ENCODE measurements at regions of chr12 and their contacts with region 1.

Region 1: GRCh38 chr12:120984351-120984898 is 6.1 kb downstream of the HNF1A start:
- DNase-seq: peak; percentile 87
- ATAC-seq: peak; percentile 9
- H3K4me3 ChIP-seq: peak overlapping the region in 1 of 3 experiments; percentile 35; a peak in 1 of 6 replicates
- H3K27ac ChIP-seq: peak overlapping the region; percentile 75
- H3K4me1 ChIP-seq: peaks cover 50% of the 10 kb centered on the region
- H3K27me3 ChIP-seq: no peaks in the 10 kb centered on the region; a peak in 1 of 5 replicates
- CTCF ChIP-seq: no peak
- EP300 ChIP-seq: peak in 1 of 2 experiments; percentile 67; a peak in 2 of 4 replicates
- POLR2A ChIP-seq: peak in 1 of 2 experiments; percentile 47; a peak in 1 of 4 replicates
- RAD21 ChIP-seq: no peak

Region 2: DNA sequence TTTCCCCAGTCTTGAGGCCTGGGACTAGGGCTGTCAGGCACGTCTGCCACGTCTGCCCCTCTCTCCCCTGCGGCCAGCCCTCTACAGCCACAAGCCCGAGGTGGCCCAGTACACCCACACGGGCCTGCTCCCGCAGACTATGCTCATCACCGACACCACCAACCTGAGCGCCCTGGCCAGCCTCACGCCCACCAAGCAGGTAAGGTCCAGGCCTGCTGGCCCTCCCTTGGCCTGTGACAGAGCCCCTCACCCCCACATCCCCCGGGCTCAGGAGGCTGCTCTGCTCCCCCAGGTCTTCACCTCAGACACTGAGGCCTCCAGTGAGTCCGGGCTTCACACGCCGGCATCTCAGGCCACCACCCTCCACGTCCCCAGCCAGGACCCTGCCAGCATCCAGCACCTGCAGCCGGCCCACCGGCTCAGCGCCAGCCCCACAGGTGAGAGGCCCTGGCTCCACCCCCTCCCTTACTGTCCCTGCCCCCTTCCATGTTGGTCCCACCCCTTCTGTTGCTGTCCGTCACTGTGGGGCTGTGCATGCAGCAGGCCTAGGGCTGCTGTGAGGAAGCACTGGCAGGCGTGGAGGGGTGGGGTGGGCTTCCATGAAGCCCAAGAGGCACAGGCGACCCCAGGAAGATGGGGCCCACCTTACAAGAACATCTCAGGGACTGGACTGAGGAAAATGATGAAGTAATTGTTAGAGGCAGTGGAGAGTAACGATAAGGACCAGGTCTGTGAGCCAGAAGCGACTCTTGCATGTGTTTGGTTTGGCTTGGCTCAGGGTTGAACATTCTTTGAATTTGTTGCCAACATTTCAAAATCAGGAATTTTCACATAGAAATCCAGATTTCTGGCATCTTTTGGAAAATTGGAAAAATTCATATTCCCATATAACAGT is 15.0 kb after region 1 on chr12:
- CTCF ChIA-PET with region 1: no interaction called
- POLR2A ChIA-PET with region 1: interaction called, 114 read pairs
- in situ Hi-C with region 1: no loop called
- intact Hi-C with region 1: no loop called
- DNase-seq: no peak
- ATAC-seq: peak; percentile 4; the same call in 1 of the 3 replicates
- H3K4me3 ChIP-seq: no peak overlapping the region
- H3K27ac ChIP-seq: no peak overlapping the region
- H3K4me1 ChIP-seq: peaks cover 16% of the 10 kb centered on the region; the same call in 1 of the 2 replicates
- H3K27me3 ChIP-seq: no peaks in the 10 kb centered on the region
- CTCF ChIP-seq: no peak
- EP300 ChIP-seq: no peak
- POLR2A ChIP-seq: peak in 1 of 2 experiments; percentile 32; a peak in 1 of 4 replicates
- RAD21 ChIP-seq: no peak

Measured in HepG2 (cell line).